Activated T-helper 2 cell treated with anti-CD3 and anti-CD28 coated beads, Interferon-gamma antibody, Interleukin-2, Interleukin-4, amounts not matched to agents 10 μg/mL and 5 μg/mL and 100 μg/mL, durations not matched to agents 14 hours and 24 hours and 36 hours (primary cell): ENCODE measurements at regions of chr9 and their contacts with region 1.

Region 1: DNA sequence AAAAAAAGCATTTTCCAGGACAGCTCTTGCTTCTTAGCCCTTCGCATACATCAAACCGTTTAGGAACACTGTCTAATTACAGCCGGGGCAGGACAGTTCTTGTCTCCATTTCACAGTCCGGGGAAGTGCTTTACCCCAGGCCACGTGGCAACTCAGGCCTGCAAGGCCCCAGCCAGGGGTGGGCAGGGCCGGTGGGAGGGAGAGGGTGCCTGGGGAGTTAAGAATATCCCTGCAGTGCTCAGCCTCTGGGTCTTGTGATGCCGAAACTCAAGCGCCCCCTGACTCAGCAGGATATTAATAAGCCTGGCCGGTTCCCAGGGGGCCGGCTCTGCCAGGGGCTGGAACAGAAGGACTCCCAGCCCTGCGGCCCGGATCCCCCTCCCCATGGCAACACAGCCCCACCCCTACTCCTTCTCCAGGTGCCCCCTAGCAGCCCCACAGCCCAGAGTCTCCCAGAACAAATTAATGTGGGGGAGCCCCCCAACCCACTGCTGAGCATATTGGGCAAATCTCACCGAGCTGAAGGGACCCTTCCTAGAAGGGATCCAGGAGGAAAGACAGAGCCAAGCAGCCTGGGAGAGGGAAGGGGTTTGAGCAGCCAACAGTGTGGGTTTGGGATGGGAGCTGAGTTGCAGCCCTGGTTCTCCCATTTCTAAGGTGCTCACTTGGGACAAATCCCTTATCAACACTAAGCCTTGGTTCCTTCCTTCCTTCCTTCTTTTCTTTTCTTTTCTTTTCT is 45.3 kb downstream of the PLPP7 start:
- DNase-seq: no peak
- H3K4me3 Mint-ChIP-seq: no peak overlapping the region
- H3K27ac Mint-ChIP-seq: no peak overlapping the region
- H3K4me1 Mint-ChIP-seq: no peaks in the 10 kb centered on the region
- H3K27me3 Mint-ChIP-seq: peaks cover 5% of the 10 kb centered on the region

Region 2: GRCh38 chr9:131056781-131057506 is 277.9 kb before region 1 on chr9:
- intact Hi-C with region 1: loop called (anchors 1 kb)
- DNase-seq: no peak
- H3K4me3 Mint-ChIP-seq: no peak overlapping the region
- H3K27ac Mint-ChIP-seq: no peak overlapping the region
- H3K4me1 Mint-ChIP-seq: no peaks in the 10 kb centered on the region
- H3K27me3 Mint-ChIP-seq: no peaks in the 10 kb centered on the region

Region 3: DNA sequence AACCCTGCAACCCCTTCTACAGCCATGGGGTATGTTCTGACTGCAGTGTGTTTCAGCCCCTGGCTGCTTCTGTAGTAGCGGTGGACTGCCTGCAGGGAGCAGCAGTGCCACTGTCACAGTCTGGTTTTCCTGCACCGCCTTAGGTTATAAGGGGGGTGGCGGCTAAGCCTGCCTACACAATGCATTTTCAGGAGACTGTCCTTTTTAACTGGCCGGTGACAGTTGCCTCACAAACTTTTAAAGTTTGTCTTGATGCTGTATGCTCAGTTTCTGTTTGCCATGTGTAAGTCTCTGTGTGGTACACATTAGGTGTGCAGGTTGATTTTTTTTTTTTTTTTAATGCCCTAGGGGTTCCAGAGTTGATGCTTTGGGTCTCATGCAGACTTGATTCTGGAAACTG is 156.4 kb before region 1 on chr9:
- intact Hi-C with region 1: loop called (anchors 1 kb)
- DNase-seq: peak; percentile 73
- H3K4me3 Mint-ChIP-seq: no peak overlapping the region
- H3K27ac Mint-ChIP-seq: no peak overlapping the region
- H3K4me1 Mint-ChIP-seq: peaks cover 4% of the 10 kb centered on the region
- H3K27me3 Mint-ChIP-seq: no peaks in the 10 kb centered on the region

Region 4: DNA sequence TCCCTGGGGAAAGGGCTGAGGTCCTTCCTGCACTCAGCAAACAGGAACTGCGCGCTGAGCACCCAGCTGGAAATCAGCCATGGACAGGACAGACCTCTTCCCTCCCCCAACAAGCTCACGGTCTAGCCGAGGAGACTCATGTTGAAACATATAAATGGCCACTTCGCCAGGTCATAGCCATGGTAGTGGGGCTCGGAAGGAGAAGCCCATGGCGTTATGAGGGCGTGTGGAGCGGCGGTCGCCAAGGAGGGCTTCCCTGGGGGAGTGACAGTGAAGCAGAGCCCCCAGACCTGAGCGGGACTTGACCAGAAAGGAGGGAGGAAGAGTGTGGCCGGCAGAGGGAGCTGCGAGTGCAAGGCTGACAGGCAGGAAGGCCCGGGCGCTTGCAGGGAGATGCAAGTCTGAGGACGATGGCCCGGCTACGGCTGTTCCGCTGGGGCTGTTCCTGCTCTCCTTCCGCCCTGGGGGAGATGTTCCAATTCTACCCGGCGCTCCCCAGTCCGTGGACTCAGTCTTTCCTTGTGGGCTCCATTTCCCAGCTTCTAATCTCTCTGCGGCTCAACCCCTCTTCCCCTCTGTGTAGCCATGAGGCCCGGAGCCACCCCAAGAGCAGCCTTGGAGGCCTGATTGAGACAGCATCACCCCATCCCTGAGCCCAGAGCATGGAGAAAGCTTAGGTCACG is 15.2 kb after region 1 on chr9:
- intact Hi-C with region 1: no loop called
- DNase-seq: peak; percentile 79
- H3K4me3 Mint-ChIP-seq: peak overlapping the region; percentile 33
- H3K27ac Mint-ChIP-seq: no peak overlapping the region
- H3K4me1 Mint-ChIP-seq: peaks cover 8% of the 10 kb centered on the region
- H3K27me3 Mint-ChIP-seq: no peaks in the 10 kb centered on the region